Heart right ventricle (tissue), 16 donors: ENCODE measurements at regions of chr17 and their contacts with region 1.

Region 1: GRCh38 chr17:59149841-59150511 is 5.0 kb downstream of the SKA2 start:
- DNase-seq: no peak
- ATAC-seq: no peak
- H3K4me3 ChIP-seq: no peak overlapping the region
- H3K27ac ChIP-seq: no peak overlapping the region
- H3K4me1 ChIP-seq: peaks cover 0 to 30% (median 19%) of the 10 kb centered on the region in 9 donors
- H3K27me3 ChIP-seq: no peaks in the 10 kb centered on the region
- CTCF ChIP-seq: no peak

Region 2: GRCh38 chr17:59106463-59107305 is 43.3 kb before region 1 on chr17 and contains the start of gene TRIM37:
- intact Hi-C with region 1: loop called in 5 of 10 experiments (anchors 2 to 10 kb)
- DNase-seq: peak; percentile 97 to 98
- ATAC-seq: peak; percentile 99 to 100 (median 99)
- H3K4me3 ChIP-seq: peak within 1 kb of the TSS; percentile 64 to 97 (median 84)
- H3K27ac ChIP-seq: peak within 1 kb of the TSS; percentile 75 to 95 (median 90)
- H3K4me1 ChIP-seq: peaks cover 0 to 35% (median 23%) of the 10 kb centered on the region in 9 donors
- H3K27me3 ChIP-seq: no peaks in the 10 kb centered on the region
- CTCF ChIP-seq: peak in 2 of 9 donors; percentile 6 to 10
- total RNA-seq, gene TRIM37: 15.2 to 22.2 (median 18.1) TPM

Region 3: DNA sequence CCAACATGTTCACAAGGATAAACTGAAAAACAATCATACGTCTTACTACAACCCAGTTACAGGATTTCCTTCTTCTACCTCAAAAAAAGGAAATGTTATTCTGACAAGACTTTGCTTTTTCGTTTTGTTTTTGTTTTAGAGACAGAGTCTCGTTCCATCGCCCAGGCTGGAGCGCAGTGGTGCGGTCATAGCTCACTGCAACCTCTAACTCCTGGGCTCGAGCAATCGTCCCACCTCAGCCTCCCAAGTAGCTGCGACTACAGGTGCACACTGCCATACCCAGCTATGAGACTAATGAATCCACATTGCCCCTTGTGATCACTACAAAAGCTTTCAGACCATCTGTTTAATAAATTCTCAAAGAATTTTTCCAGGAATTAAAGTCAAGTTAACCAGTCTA is 34.5 kb before region 1 on chr17:
- intact Hi-C with region 1: loop called in 1 of 10 experiments (anchors 2 kb)
- DNase-seq: no peak
- ATAC-seq: no peak
- H3K4me3 ChIP-seq: no peak overlapping the region
- H3K27ac ChIP-seq: no peak overlapping the region
- H3K4me1 ChIP-seq: no peaks in the 10 kb centered on the region
- H3K27me3 ChIP-seq: no peaks in the 10 kb centered on the region
- CTCF ChIP-seq: no peak

Region 4: GRCh38 chr17:59220376-59221158 is 70.6 kb after region 1 on chr17 and contains the start of gene GDPD1:
- intact Hi-C with region 1: no loop called
- DNase-seq: peak; percentile 92 to 98
- ATAC-seq: peak; percentile 97 to 99 (median 99)
- H3K4me3 ChIP-seq: peak within 1 kb of the TSS; percentile 52 to 99 (median 78)
- H3K27ac ChIP-seq: peak within 1 kb of the TSS in 9 of 10 donors; percentile 43 to 86 (median 63)
- H3K4me1 ChIP-seq: peaks cover 0 to 16% (median 10%) of the 10 kb centered on the region in 9 donors
- H3K27me3 ChIP-seq: no peaks in the 10 kb centered on the region
- CTCF ChIP-seq: peak; percentile 35 to 84 (median 70)
- total RNA-seq, gene GDPD1: 1.3 to 4.8 (median 2.0) TPM